Common myeloid progenitor, CD34-positive (primary cell): ENCODE measurements at regions of chr4 and their contacts with region 1.

Region 1: DNA sequence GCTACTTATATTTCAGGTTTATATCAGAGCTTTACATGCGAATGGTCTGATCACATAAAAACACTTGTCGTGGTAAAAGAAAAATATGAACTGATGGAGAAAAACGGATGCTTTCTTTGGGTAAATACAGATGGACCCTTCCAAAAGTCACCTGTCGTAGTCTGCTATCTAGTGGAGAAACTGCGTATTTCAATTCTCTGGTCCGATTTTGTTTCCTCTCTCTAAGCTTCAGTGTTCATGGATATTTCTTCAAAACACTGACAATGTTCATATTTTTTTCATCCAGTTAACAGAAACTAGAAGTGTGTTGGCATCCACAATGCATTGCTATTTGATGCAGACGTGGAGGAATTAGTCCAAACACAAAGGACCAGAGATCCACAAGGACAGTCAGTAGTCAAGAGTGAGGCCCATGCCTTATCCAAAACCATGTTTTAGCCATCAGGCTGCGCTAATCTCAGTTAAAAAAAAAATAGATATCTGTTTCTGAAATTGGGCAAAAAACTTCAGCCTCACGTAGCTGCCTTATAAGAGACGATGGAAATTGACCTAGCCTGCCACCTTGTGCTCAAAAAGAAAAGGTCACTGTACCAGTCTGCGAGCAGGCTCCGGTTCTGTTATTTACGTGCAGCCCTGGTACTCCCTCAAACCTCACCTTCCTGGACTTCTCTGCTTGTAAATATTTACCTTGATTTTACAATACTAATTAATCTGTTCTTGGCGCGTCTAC is 16.0 kb downstream of the MEPE start:
- DNase-seq: peak; percentile 69 to 84 (median 84)
- H3K4me3 ChIP-seq: peak overlapping the region in 5 of 7 experiments; percentile 13 to 78 (median 44)
- H3K27ac ChIP-seq: no peak overlapping the region
- H3K4me1 ChIP-seq: peaks cover 9 to 41% (median 21%) of the 10 kb centered on the region in 4 experiments
- H3K27me3 ChIP-seq: peaks cover 0 to 1% (median 0%) of the 10 kb centered on the region in 5 experiments

Region 2: DNA sequence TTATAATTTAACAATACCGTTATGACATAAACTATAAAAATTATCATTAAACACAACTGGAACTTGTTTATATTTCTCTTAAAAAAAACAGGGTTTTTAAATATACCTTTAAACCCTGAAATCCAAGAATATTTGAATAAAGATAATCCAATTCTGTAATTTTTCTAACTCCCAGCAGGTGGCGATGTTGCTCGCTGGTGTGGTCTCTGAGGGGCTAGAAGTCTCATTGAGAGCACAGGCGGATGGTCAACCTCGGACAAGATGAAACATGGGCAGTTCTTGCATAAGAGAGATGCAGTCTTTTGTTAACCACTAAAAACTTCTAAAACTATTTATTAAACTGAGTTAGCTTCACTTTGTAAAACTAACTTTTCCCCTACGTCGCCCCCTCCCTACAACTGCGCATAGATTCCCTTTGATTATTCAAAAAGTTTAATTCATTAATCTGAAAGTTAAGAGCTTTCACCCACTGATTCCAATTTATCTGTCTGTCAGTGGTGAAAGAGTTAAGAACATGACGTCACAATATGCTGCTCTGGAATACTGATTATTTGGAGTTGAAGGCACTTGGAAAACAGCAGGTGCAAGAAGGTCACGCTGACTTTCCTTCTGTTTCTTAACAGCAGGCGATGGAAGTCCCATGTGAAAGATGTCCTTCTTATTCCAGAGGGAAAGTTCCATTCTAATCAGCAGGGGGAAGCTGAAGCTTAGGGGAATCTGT is 169.2 kb before region 1 on chr4:
- CTCF ChIA-PET with region 1: interaction called, 15 read pairs
- POLR2A ChIA-PET with region 1: no interaction called
- DNase-seq: peak; percentile 39 to 67 (median 49)
- H3K4me3 ChIP-seq: no peak overlapping the region
- H3K27ac ChIP-seq: no peak overlapping the region
- H3K4me1 ChIP-seq: no peaks in the 10 kb centered on the region
- H3K27me3 ChIP-seq: no peaks in the 10 kb centered on the region

Region 3: DNA sequence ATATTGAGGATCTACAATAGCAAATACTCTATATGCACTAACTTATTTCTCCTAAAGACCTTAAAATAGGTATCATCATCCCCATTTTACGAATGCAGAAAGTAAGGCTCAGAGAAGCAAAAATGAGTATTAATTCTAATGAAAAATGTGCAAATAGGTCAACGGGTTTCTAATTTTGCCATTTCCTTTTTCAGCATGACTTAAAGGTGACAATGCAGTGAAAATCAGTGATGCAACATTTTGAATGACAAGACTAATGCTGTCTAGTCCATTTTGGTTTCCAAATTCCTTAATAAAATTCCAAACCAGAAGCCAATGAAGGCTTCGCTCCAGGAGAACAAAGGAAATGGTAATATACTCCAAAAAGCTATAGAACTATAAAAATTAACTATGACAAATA is 86.5 kb before region 1 on chr4:
- CTCF ChIA-PET with region 1: no interaction called
- POLR2A ChIA-PET with region 1: no interaction called
- DNase-seq: no peak
- H3K4me3 ChIP-seq: no peak overlapping the region
- H3K27ac ChIP-seq: no peak overlapping the region
- H3K4me1 ChIP-seq: no peaks in the 10 kb centered on the region
- H3K27me3 ChIP-seq: peaks cover 0 to 2% (median 0%) of the 10 kb centered on the region in 5 experiments

Region 4: DNA sequence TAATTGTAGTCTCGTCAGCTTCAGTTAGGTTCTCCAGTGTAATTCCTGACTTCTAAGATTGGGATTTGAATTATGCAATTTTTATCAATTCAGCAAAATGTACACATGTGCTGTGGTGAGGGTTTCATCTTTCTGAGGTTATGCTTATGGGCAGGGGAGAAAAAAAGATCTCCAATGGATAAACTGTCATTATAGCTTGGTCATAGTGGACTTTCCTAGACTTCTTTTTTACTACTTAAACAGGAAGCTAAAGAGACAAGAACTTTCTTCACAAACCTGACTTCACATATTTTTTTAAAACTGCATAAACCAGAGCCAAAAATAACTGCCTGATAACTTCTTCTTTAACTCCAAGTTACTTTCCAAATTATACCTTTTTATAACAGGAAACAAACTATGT is 105.0 kb after region 1 on chr4:
- CTCF ChIA-PET with region 1: interaction called, 13 read pairs
- POLR2A ChIA-PET with region 1: no interaction called
- DNase-seq: peak in 2 of 3 donors; percentile 53 to 64
- H3K4me3 ChIP-seq: peak overlapping the region in 1 of 7 experiments; percentile 17
- H3K27ac ChIP-seq: no peak overlapping the region
- H3K4me1 ChIP-seq: peaks cover 4 to 52% (median 21%) of the 10 kb centered on the region in 4 experiments
- H3K27me3 ChIP-seq: no peaks in the 10 kb centered on the region

Region 5: GRCh38 chr4:87973283-87974169 is 124.7 kb after region 1 on chr4:
- CTCF ChIA-PET with region 1: interaction called, 59 read pairs
- POLR2A ChIA-PET with region 1: no interaction called
- DNase-seq: peak; percentile 53 to 66 (median 62)
- H3K4me3 ChIP-seq: peak overlapping the region in 2 of 7 experiments; percentile 12 to 27
- H3K27ac ChIP-seq: no peak overlapping the region
- H3K4me1 ChIP-seq: peaks cover 9 to 33% (median 19%) of the 10 kb centered on the region in 4 experiments
- H3K27me3 ChIP-seq: no peaks in the 10 kb centered on the region

Region 6: GRCh38 chr4:88090898-88091297 is 242.1 kb after region 1 on chr4:
- CTCF ChIA-PET with region 1: no interaction called
- POLR2A ChIA-PET with region 1: no interaction called
- DNase-seq: no peak
- H3K4me3 ChIP-seq: no peak overlapping the region
- H3K27ac ChIP-seq: no peak overlapping the region
- H3K4me1 ChIP-seq: peaks cover 0 to 7% (median 4%) of the 10 kb centered on the region in 4 experiments
- H3K27me3 ChIP-seq: no peaks in the 10 kb centered on the region